ENCODE measurements at regions of chr13 and their contacts with region 1.

Region 1: DNA sequence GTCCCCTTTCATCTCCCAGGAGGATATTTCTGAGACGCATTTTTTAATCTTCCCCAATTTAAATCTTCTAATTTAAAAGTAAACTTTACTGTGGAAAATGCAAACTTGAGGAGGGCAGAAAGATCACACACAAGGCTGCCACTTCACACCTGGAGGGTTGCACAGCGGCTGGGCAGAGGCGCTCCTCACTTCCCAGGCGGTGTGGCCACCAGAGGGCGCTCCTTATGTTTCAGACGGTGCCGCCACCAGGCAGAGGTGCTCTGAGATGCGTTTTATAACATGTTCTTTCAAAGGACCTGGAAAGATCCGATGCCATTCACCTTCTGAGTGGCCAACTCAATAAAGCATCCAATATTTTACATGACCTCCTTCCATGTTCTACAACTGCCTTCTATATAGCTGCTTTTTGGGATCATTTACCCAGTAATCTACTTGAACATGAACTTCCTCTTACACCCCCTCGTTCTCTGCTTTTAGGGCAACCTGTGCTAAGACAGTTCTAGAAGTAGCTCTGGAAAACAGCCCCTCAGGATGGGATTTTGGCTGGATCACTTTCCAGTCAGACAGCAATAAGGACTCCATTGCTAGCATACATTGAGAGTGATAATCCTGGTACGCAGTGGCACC is 14.8 kb upstream of the MTUS2 start:
- DNase-seq: no peak
- ATAC-seq: peak; percentile 85
- H3K4me3 ChIP-seq: no peak overlapping the region
- H3K27ac ChIP-seq: no peak overlapping the region
- H3K4me1 ChIP-seq: no peaks in the 10 kb centered on the region
- H3K27me3 ChIP-seq: no peaks in the 10 kb centered on the region; a peak in 1 of 5 replicates
- CTCF ChIP-seq: peak; percentile 71
- EP300 ChIP-seq: no peak
- POLR2A ChIP-seq: no peak
- RAD21 ChIP-seq: 0 out of 2 replicates have a peak, but pooled peaks have one; percentile 28

Region 2: DNA sequence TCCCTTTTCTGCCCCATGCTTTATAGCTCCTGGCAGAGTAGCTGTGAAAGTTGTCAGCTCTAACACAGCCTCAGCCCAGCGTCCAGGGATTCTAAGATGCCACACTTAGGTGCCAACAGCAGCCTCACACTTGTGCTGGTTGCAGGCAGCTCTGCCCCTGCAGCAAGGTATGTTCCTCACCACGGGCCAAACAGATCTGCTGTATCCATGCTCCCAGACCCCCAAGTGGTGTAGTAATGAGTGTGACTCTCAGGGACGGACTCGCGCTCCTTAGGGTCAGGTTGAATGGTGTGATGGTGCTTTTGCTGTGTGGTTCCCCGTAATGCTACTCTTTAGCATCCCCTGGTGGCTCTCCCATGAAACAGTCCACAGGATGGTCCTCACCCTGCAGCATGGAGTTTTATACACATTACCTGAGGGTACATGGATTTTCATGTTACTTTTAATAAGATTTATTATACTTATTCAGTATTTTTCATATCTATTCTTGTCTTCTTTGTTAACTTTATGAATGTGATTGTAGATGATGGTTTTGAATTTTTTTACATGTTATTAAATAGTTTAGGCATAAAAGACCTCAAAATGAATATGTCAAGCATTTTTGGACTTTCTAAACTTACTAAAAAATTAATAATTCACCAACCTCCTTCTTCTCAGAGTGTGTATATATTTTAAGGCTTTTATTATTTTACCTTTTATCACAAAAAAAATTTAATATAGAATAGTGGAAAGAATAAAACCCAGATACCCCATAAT is 557.7 kb after region 1 on chr13:
- CTCF ChIA-PET with region 1: interaction called, 7 read pairs
- POLR2A ChIA-PET with region 1: no interaction called
- in situ Hi-C with region 1: loop called (anchors 10 kb)
- intact Hi-C with region 1: loop called (anchors 1 kb)
- DNase-seq: peak; percentile 43
- ATAC-seq: peak; percentile 99
- H3K4me3 ChIP-seq: no peak overlapping the region
- H3K27ac ChIP-seq: no peak overlapping the region
- H3K4me1 ChIP-seq: no peaks in the 10 kb centered on the region
- H3K27me3 ChIP-seq: peaks cover 0 to 17% of the 10 kb centered on the region in 2 experiments; a peak in 2 of 5 replicates
- CTCF ChIP-seq: peak; percentile 83
- EP300 ChIP-seq: no peak
- POLR2A ChIP-seq: no peak
- RAD21 ChIP-seq: no peak

Region 3: GRCh38 chr13:29369060-29369743 is 563.9 kb after region 1 on chr13:
- CTCF ChIA-PET with region 1: no interaction called
- POLR2A ChIA-PET with region 1: no interaction called
- in situ Hi-C with region 1: loop called (anchors 10 kb)
- intact Hi-C with region 1: loop called (anchors 1 kb)
- DNase-seq: peak; percentile 44
- ATAC-seq: peak; percentile 84
- H3K4me3 ChIP-seq: no peak overlapping the region
- H3K27ac ChIP-seq: no peak overlapping the region
- H3K4me1 ChIP-seq: no peaks in the 10 kb centered on the region
- H3K27me3 ChIP-seq: no peaks in the 10 kb centered on the region
- CTCF ChIP-seq: peak; percentile 59
- EP300 ChIP-seq: no peak
- POLR2A ChIP-seq: no peak
- RAD21 ChIP-seq: no peak

Measured in HepG2 (cell line).